Posterior cingulate gyrus (tissue), 11 donors: ENCODE measurements at regions of chr17 and their contacts with region 1.

Region 1: GRCh38 chr17:75515496-75516254 is at the start of gene CASKIN2:
- DNase-seq: peak; percentile 93 to 99 (median 96)

Region 2: DNA sequence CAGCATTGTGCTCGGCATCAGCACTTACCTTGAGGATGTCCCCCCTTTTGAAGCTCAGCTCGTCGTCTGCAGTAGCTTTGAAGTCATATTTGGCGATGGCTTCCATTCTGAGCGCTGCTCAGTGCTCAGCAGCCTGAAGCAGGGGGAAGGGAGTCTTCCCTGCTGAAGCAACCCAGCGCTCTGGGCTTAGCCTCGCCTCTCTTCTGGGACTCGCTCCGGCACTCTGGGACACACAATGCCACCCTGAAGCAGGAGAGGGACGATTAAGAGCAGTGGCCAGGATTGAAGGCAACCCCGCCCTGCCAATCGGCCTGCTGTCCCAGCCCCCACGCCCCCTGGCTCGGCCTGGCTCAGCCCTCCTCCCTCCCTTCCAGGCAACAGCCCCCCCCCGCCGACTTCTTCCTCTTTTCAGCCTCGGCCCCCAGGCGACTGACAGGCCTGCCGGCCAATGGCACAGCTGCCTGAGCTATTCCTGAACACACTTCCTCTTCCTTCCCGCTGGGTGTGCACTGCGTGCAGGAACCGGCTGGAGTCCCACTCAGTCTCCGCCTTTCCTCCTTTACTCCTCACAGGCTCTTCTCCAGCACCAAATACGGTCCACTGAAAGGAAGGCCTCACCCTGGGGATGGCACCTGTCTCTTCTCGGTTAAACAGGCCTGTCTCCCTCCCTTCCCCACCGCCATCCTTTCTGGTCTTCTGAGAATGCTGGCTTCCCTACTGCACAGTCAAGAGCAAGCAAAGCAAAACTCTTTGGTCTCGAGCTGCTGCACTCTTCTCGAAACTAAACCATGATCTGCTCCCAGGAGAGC is 121.9 kb before region 1 on chr17:
- intact Hi-C with region 1: no loop called
- DNase-seq: peak; percentile 98 to 100 (median 99)

Region 3: GRCh38 chr17:75430159-75430974 is 85.3 kb before region 1 on chr17:
- intact Hi-C with region 1: loop called (anchors 2 kb)
- DNase-seq: peak in 1 of 10 donors; percentile 64

Region 4: GRCh38 chr17:75456417-75457046 is 59.1 kb before region 1 on chr17 and contains the start of gene TMEM94:
- intact Hi-C with region 1: loop called (anchors 2 kb)
- DNase-seq: peak; percentile 92 to 99 (median 96)

Region 5: DNA sequence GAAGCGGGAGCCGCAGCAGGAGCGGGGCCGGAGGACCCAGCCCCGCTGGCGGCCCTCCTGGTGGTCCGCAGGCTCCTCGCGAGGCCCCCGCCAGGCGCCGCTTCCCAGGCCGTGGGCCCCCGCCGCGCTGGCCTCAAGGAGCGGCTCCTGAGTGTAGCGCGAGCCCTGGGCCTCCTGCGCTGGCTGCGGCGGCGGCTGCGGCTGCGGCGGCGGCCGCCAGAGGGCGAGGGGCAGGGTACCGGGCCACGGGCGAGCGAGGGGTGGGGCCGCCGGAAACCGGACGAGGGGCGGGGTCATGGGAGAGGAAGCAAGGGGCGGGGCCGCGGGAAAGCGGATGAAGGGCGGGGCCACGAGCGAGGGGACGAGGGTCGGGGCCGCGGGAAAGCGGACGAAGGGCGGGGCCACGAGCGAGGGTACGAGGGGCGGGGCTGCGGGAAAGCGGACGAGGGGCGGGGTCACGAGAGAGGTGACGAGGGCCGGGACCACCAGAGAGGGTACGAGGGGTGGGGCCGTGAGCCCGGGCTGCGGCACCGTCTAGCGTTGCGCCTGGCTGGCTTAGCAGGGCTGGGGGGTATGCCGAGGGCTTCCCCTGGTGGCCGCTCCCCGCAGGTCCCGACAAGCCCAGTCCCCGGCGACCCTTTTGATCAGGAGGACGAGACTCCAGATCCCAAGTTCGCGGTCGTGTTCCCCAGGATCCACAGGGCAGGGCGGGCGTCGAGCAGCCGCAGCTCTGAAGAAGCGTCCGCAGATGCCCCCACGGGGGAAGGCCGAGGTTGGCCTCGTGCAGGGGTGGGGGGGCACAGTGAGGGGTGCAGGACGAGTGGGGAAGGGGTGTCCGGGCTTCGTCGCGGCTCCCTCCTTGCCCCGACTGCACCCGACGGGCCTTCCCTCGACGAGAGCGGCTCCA is 73.6 kb after region 1 on chr17:
- intact Hi-C with region 1: loop called (anchors 1 kb)
- DNase-seq: peak; percentile 82 to 98 (median 92)